ENCODE measurements at regions of chr7 and their contacts with region 1.

Region 1: GRCh38 chr7:23570592-23571200 is 26.5 kb upstream of the CCDC126 start:
- DNase-seq: peak; percentile 74
- ATAC-seq: peak; percentile 81
- H3K4me3 Mint-ChIP-seq: no peak overlapping the region
- H3K27ac Mint-ChIP-seq: no peak overlapping the region
- H3K4me1 Mint-ChIP-seq: peaks cover 2% of the 10 kb centered on the region
- H3K27me3 Mint-ChIP-seq: peaks cover 21% of the 10 kb centered on the region

Region 2: DNA sequence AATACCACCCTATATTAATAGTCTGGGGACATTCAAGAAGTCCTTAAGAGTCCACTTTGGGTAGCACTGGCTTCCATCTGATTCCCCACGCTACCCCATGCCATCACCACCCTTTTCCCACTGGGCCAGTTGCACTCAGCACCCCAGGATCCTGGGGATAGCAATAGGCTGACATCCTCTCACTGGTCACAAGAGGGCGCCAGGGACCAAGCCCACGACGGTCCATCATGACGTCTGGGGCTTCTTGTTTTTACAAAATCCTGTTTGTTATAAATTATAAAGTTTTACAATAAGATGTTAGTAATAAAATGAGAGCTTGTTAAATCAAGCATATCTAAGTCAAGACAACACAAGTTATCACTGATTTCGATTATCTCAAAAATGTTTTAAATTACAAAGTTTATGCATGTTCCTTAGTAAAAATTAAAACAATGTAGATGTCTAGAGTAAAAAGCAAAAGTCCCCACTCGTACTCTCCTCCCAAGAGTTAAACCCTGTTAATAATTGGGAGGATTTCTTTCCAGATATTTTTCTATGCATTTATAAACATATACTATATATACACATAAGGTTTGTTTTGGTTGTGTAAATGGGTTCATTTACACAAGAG is 308.7 kb before region 1 on chr7:
- CTCF ChIA-PET with region 1: no interaction called
- DNase-seq: peak; percentile 74
- ATAC-seq: peak; percentile 95
- H3K4me3 Mint-ChIP-seq: no peak overlapping the region
- H3K27ac Mint-ChIP-seq: no peak overlapping the region
- H3K4me1 Mint-ChIP-seq: peaks cover 6% of the 10 kb centered on the region
- H3K27me3 Mint-ChIP-seq: peaks cover 22% of the 10 kb centered on the region

Region 3: GRCh38 chr7:23462846-23463245 is 107.8 kb before region 1 on chr7:
- CTCF ChIA-PET with region 1: no interaction called
- DNase-seq: no peak
- ATAC-seq: no peak
- H3K4me3 Mint-ChIP-seq: no peak overlapping the region
- H3K27ac Mint-ChIP-seq: no peak overlapping the region
- H3K4me1 Mint-ChIP-seq: peaks cover 11% of the 10 kb centered on the region
- H3K27me3 Mint-ChIP-seq: peaks cover 77% of the 10 kb centered on the region

Region 4: DNA sequence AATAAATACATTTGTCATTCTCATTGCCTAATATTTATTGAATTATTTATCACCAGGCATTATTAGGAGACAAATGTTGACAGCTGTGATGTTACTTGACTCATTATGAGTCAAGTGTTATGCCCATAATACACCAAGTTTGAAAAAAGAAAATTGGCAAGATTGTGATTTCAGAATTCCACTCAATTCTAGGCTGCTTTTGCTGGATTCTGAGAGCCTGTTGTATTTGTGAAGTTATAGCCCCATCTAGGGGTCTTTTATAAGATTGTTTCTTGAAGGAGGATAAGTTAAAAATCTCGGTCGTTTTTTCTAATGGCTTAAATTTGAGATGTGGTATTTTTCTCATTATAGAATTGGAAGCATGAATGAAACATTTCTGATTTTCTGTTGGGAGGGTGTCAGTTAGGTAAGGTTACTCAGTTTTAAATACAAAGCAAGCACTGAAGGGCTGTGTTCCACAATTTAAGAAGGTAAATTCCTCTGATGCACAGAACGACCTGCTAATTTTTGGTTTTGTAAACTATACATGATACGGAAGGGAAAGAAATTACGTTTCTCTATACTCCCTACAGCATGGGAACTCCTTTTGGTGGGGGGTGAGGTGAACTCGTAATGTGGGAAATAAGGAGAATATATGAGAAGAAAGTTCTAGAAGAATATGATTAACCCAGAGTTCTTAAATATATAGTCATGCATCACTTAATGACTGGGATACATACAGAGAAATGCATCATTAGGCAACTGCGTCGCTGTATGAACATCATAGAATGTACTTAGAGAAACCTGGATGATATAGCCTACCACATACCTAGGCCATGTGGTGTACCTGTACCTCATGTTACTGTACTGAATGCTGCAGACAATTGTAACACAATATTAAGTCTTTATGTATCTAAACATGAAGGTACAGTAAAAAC is 141.9 kb after region 1 on chr7:
- CTCF ChIA-PET with region 1: interaction called, 19 read pairs
- DNase-seq: no peak
- ATAC-seq: no peak
- H3K4me3 Mint-ChIP-seq: no peak overlapping the region
- H3K27ac Mint-ChIP-seq: no peak overlapping the region
- H3K4me1 Mint-ChIP-seq: no peaks in the 10 kb centered on the region
- H3K27me3 Mint-ChIP-seq: no peaks in the 10 kb centered on the region

Measured in activated CD8-positive, alpha-beta memory T cell treated with anti-CD3 and anti-CD28 coated beads, Interleukin-2, amount 10 ng/mL, durations not matched to agents 7 days and 5 days (primary cell).